H1 (cell line): ENCODE measurements at regions of chr6 and their contacts with region 1.

Region 1: GRCh38 chr6:35415065-35415991 is 36.8 kb upstream of the FANCE start:
- DNase-seq: no peak
- H3K4me3 ChIP-seq: no peak overlapping the region
- H3K27ac ChIP-seq: no peak overlapping the region
- H3K4me1 ChIP-seq: peaks cover 0 to 9% (median 1%) of the 10 kb centered on the region in 4 experiments; a peak in 4 of 7 replicates
- H3K27me3 ChIP-seq: no peaks in the 10 kb centered on the region
- CTCF ChIP-seq: peak; percentile 70 to 80 (median 78)
- EP300 ChIP-seq: no peak
- POLR2A ChIP-seq: no peak
- RAD21 ChIP-seq: peak; percentile 65 to 77

Region 2: GRCh38 chr6:35213298-35213791 is 202.0 kb before region 1 on chr6:
- CTCF ChIA-PET with region 1: no interaction called
- POLR2A ChIA-PET with region 1: no interaction called
- DNase-seq: no peak
- H3K4me3 ChIP-seq: peak overlapping the region; percentile 45 to 74 (median 60)
- H3K27ac ChIP-seq: no peak overlapping the region
- H3K4me1 ChIP-seq: peaks cover 7 to 37% (median 27%) of the 10 kb centered on the region in 4 experiments
- H3K27me3 ChIP-seq: peaks cover 27 to 78% (median 66%) of the 10 kb centered on the region in 4 experiments
- CTCF ChIP-seq: no peak
- EP300 ChIP-seq: 0 out of 3 replicates have a peak, but pooled peaks of 1 of the 2 experiments have one; percentile 14
- POLR2A ChIP-seq: no peak
- RAD21 ChIP-seq: no peak

Region 3: GRCh38 chr6:35342258-35343091 is 72.9 kb before region 1 on chr6 and contains the start of gene PPARD:
- CTCF ChIA-PET with region 1: interaction called, 62 read pairs
- POLR2A ChIA-PET with region 1: interaction called, 3 read pairs
- DNase-seq: peak; percentile 82 to 100
- H3K4me3 ChIP-seq: peak within 1 kb of the TSS; percentile 38 to 77 (median 62)
- H3K27ac ChIP-seq: no peak within 1 kb of the TSS
- H3K4me1 ChIP-seq: peaks cover 0 to 7% (median 1%) of the 10 kb centered on the region in 4 experiments; a peak in 3 of 7 replicates
- H3K27me3 ChIP-seq: no peaks in the 10 kb centered on the region
- CTCF ChIP-seq: peak; percentile 95 to 98 (median 95)
- EP300 ChIP-seq: no peak
- POLR2A ChIP-seq: 0 out of 3 replicates have a peak, but pooled peaks of 1 of the 2 experiments have one; percentile 21
- RAD21 ChIP-seq: peak; percentile 99 to 100
- total RNA-seq, gene PPARD: 14.9 and 16.9 TPM in 2 replicates

Region 4: DNA sequence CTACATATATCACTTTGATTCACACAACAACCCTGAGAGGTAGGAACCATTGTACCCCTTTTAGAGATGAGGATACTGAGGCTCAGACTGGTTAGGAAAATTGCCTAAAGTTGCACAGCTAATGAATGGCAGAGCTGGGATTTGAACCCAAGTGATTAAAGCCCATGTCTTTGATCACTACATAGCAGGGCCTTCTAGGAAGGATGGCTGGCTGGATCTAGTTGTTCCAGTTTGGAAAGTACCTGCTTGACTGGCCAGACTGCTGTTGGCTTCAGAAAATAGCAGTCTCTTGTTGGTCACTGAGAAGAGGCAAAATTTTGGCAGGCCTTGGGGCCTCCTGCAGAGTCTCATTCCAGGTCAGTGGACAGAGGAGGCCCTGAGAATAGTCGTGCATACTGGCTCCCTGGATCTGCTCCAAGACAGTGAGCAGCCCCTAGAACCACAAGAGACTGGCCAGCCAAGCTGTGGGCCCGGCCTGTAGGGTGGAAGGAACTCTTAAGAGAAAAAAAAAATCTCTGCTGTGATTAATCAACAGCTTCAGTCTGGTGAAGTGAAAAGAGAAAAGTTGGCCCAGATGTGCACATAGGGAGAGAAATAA is 55.5 kb before region 1 on chr6:
- CTCF ChIA-PET with region 1: interaction called, 17 read pairs
- POLR2A ChIA-PET with region 1: no interaction called
- DNase-seq: no peak
- H3K4me3 ChIP-seq: 0 out of 8 replicates have a peak overlapping the region, but pooled peaks of 1 of the 4 experiments have one; percentile 5
- H3K27ac ChIP-seq: peak overlapping the region; percentile 32; the same call in 1 of the 2 replicates
- H3K4me1 ChIP-seq: peaks cover 4 to 17% (median 13%) of the 10 kb centered on the region in 4 experiments
- H3K27me3 ChIP-seq: no peaks in the 10 kb centered on the region
- CTCF ChIP-seq: no peak
- EP300 ChIP-seq: no peak
- POLR2A ChIP-seq: no peak
- RAD21 ChIP-seq: no peak

Region 5: GRCh38 chr6:35396991-35397390 is 18.3 kb before region 1 on chr6:
- CTCF ChIA-PET with region 1: interaction called, 25 read pairs
- POLR2A ChIA-PET with region 1: interaction called, 4 read pairs
- DNase-seq: no peak
- H3K4me3 ChIP-seq: no peak overlapping the region
- H3K27ac ChIP-seq: no peak overlapping the region
- H3K4me1 ChIP-seq: peaks cover 0 to 8% (median 0%) of the 10 kb centered on the region in 4 experiments; a peak in 2 of 7 replicates
- H3K27me3 ChIP-seq: no peaks in the 10 kb centered on the region
- CTCF ChIP-seq: no peak
- EP300 ChIP-seq: no peak
- POLR2A ChIP-seq: no peak
- RAD21 ChIP-seq: no peak

Region 6: GRCh38 chr6:35402136-35402855 is 13.0 kb before region 1 on chr6:
- CTCF ChIA-PET with region 1: interaction called, 35 read pairs
- POLR2A ChIA-PET with region 1: interaction called, 4 read pairs
- DNase-seq: no peak
- H3K4me3 ChIP-seq: no peak overlapping the region
- H3K27ac ChIP-seq: no peak overlapping the region
- H3K4me1 ChIP-seq: peaks cover 0 to 8% (median 0%) of the 10 kb centered on the region in 4 experiments; a peak in 2 of 7 replicates
- H3K27me3 ChIP-seq: no peaks in the 10 kb centered on the region
- CTCF ChIP-seq: no peak
- EP300 ChIP-seq: no peak
- POLR2A ChIP-seq: no peak
- RAD21 ChIP-seq: no peak

Region 7: DNA sequence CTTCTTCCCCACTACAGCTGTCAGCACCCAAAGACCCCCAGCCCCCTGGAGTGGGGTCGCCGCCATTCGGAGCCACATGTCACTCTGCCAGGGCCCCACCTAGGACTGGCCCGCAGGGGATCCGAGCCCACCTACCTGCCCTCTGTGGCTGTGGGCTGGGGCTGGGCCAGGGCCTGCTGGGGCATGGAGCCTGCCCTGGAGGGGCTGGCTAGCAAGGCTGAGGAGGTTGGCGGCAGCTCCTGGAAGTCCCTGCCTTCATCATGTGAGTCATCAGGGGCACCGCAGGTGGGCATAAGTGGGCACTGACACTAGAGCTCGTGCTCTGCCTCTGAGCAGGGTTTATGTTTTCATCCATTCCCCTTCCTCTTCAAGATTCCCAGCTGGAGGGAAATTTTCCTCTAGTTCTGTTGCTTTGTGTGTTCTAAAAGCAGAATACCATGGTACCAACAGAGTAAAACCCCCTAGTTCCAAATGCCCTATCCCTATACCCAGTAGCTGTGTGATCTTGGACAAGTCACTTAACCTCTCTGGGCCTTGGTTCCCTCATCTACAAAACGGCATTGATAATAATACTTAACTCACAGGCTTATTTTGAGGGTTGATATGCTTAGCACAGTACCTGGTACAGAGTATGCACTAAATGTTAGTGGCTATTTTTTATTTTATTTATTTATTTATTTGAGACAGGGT is 28.2 kb after region 1 on chr6:
- CTCF ChIA-PET with region 1: interaction called, 138 read pairs
- POLR2A ChIA-PET with region 1: interaction called, 3 read pairs
- DNase-seq: no peak
- H3K4me3 ChIP-seq: no peak overlapping the region
- H3K27ac ChIP-seq: no peak overlapping the region
- H3K4me1 ChIP-seq: no peaks in the 10 kb centered on the region
- H3K27me3 ChIP-seq: no peaks in the 10 kb centered on the region
- CTCF ChIP-seq: no peak
- EP300 ChIP-seq: no peak
- POLR2A ChIP-seq: no peak
- RAD21 ChIP-seq: no peak